ENCODE measurements at regions of chr21 and their contacts with region 1.

Region 1: GRCh38 chr21:29073222-29074006 is at the start of gene CCT8:
- DNase-seq: peak; percentile 99
- H3K4me3 Mint-ChIP-seq: peak within 1 kb of the TSS; percentile 100
- H3K27ac Mint-ChIP-seq: peak within 1 kb of the TSS; percentile 100
- H3K4me1 Mint-ChIP-seq: peaks cover 22% of the 10 kb centered on the region
- H3K27me3 Mint-ChIP-seq: no peaks in the 10 kb centered on the region
- CTCF ChIP-seq: no peak
- total RNA-seq, gene CCT8: 174 and 221 TPM in 2 replicates

Region 2: DNA sequence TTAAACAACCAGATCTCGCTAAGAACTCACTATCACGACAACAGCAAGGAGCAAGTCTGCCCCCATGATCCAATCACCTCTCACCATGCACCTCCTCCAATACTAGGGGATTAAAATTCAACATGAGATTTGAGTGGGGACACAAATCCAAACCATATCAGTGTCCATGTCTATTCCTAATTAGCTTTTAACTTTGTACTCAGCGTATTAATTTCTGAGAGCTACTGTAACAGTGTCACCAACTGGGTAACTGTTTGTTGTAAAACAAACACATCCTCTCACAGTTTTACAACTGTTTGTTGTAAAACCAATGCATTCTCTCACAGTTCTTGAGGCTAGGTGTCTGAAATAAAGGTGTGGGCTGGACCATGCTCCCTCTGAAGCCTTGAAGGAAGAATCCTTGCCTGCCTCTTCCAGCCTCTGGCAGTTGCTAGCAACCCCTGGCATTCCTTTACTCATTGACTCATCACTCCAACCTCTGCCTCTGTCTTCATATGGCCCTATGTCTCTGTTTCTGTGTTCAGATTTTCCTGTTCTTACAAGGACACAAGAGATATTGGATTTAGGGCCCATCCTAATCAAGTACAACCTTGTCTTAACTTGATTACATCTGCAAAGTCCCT is 201.9 kb before region 1 on chr21:
- CTCF ChIA-PET with region 1: no interaction called
- POLR2A ChIA-PET with region 1: no interaction called
- intact Hi-C with region 1: no loop called
- DNase-seq: peak; percentile 14
- H3K4me3 Mint-ChIP-seq: no peak overlapping the region
- H3K27ac Mint-ChIP-seq: no peak overlapping the region
- H3K4me1 Mint-ChIP-seq: peaks cover 10% of the 10 kb centered on the region
- H3K27me3 Mint-ChIP-seq: no peaks in the 10 kb centered on the region
- CTCF ChIP-seq: no peak

Region 3: GRCh38 chr21:29002442-29003144 is 70.8 kb before region 1 on chr21:
- CTCF ChIA-PET with region 1: no interaction called
- POLR2A ChIA-PET with region 1: interaction called, 32 read pairs
- intact Hi-C with region 1: no loop called
- DNase-seq: peak; percentile 94
- H3K4me3 Mint-ChIP-seq: peak overlapping the region; percentile 78
- H3K27ac Mint-ChIP-seq: peak overlapping the region; percentile 91
- H3K4me1 Mint-ChIP-seq: no peaks in the 10 kb centered on the region
- H3K27me3 Mint-ChIP-seq: no peaks in the 10 kb centered on the region
- CTCF ChIP-seq: no peak

Region 4: GRCh38 chr21:29024474-29025327 is 48.7 kb before region 1 on chr21 and contains the start of gene USP16:
- CTCF ChIA-PET with region 1: interaction called, 3 read pairs
- POLR2A ChIA-PET with region 1: interaction called, 126 read pairs
- intact Hi-C with region 1: no loop called
- DNase-seq: peak; percentile 97
- H3K4me3 Mint-ChIP-seq: peak within 1 kb of the TSS; percentile 85
- H3K27ac Mint-ChIP-seq: peak within 1 kb of the TSS; percentile 98
- H3K4me1 Mint-ChIP-seq: peaks cover 13% of the 10 kb centered on the region
- H3K27me3 Mint-ChIP-seq: no peaks in the 10 kb centered on the region
- CTCF ChIP-seq: no peak
- total RNA-seq, gene USP16: 28.0 and 39.3 TPM in 2 replicates

Region 5: GRCh38 chr21:29091032-29091431 is 17.6 kb after region 1 on chr21:
- CTCF ChIA-PET with region 1: interaction called, 14 read pairs
- POLR2A ChIA-PET with region 1: interaction called, 95 read pairs
- intact Hi-C with region 1: no loop called
- DNase-seq: peak; percentile 65
- H3K4me3 Mint-ChIP-seq: no peak overlapping the region
- H3K27ac Mint-ChIP-seq: peak overlapping the region; percentile 80
- H3K4me1 Mint-ChIP-seq: peaks cover 34% of the 10 kb centered on the region
- H3K27me3 Mint-ChIP-seq: no peaks in the 10 kb centered on the region
- CTCF ChIP-seq: no peak

Region 6: GRCh38 chr21:29145354-29145782 is 72.0 kb after region 1 on chr21:
- CTCF ChIA-PET with region 1: interaction called, 3 read pairs
- POLR2A ChIA-PET with region 1: interaction called, 73 read pairs
- intact Hi-C with region 1: no loop called
- DNase-seq: peak; percentile 91
- H3K4me3 Mint-ChIP-seq: peak overlapping the region; percentile 39
- H3K27ac Mint-ChIP-seq: peak overlapping the region; percentile 92
- H3K4me1 Mint-ChIP-seq: peaks cover 23% of the 10 kb centered on the region
- H3K27me3 Mint-ChIP-seq: no peaks in the 10 kb centered on the region
- CTCF ChIP-seq: no peak

Region 7: GRCh38 chr21:29318354-29318753 is 244.9 kb after region 1 on chr21:
- CTCF ChIA-PET with region 1: no interaction called
- POLR2A ChIA-PET with region 1: interaction called, 11 read pairs
- intact Hi-C with region 1: no loop called
- DNase-seq: no peak
- H3K4me3 Mint-ChIP-seq: no peak overlapping the region
- H3K27ac Mint-ChIP-seq: no peak overlapping the region
- H3K4me1 Mint-ChIP-seq: peaks cover 54% of the 10 kb centered on the region
- H3K27me3 Mint-ChIP-seq: no peaks in the 10 kb centered on the region
- CTCF ChIP-seq: no peak

Measured in MCF 10A (cell line).